GM10248 (cell line): ENCODE measurements at regions of chr10 and their contacts with region 1.

Region 1: GRCh38 chr10:119445311-119445934 is 97.1 kb downstream of the RGS10 start:
- DNase-seq: peak; percentile 89
- CTCF ChIP-seq: peak; percentile 96

Region 2: GRCh38 chr10:119368991-119369869 is 76.2 kb before region 1 on chr10:
- CTCF ChIA-PET with region 1: no interaction called
- POLR2A ChIA-PET with region 1: no interaction called
- DNase-seq: peak; percentile 75
- CTCF ChIP-seq: no peak

Region 3: DNA sequence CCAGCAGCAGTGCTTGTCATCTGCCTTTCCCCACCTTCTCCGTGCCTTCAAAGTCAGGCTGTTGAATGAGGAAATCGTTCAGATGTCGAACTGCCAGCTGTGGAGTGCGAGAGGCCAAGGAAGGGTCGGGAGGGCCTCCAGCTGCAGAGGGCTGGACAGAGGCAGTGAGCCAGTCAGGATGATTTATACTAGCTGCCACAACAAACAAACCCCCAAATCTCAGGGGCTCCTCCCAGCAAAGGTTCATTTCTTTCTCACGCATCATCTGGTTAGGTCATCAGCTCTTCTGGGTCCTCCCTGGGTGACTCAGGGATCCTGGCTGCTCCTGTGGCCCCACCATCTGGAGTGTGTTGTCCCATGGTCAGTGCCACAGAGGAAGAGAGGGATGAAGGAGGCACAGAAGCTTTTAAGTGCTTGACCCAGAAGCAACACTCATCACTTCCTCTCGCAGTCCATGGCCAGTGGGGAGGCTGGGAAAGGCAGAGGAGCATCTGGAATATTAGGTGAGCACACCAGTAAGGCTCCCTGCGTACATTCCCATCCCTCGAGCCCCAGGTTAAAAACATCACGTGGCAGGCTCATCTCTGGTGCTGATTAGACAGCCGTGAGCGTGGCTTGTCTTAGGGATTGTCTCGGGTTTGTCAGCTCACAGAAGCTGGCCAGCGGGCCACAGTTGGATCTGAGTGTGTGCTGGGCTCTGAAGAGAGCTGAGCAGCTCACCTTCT is 43.6 kb before region 1 on chr10:
- CTCF ChIA-PET with region 1: interaction called, 10 read pairs
- POLR2A ChIA-PET with region 1: no interaction called
- DNase-seq: no peak
- CTCF ChIP-seq: no peak

Region 4: DNA sequence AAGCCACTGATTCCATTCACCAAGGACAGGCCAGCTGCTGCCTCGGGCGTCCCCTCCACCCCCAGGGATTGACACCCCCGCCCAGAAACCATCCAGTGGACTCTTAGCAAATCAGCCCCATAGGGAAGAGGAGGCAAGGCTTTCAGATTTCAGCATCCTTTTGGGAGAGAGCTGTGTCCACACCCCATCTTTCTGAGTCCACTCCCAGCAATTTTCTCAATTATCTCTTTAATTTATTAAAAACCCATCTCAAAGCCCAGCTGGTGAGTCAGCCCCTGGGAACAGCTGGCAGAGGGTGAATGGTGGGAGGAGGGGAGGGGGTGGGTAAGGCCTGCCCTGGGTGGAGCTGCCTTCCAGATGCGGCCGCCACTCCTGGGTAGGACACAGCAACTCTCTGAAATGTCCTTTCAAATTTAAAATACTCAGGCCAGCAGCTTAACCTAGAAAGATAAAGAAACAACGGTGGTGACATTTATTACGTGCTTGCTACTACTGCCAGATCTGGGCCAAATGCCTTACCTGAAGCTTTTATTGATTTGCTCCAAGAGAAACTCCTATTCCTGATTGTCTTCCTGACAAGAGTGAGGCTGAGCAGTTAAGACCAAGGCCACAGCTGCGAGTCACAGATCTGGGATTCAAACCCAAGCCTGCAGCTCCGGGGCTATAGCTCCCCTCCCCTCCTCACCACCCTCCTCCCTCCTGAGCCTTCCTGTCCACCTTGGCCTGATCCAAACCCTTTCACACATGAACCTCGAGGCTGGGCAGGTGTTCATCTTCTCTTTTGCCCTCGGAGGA is 23.3 kb before region 1 on chr10:
- CTCF ChIA-PET with region 1: interaction called, 34 read pairs
- POLR2A ChIA-PET with region 1: no interaction called
- DNase-seq: no peak
- CTCF ChIP-seq: no peak

Region 5: DNA sequence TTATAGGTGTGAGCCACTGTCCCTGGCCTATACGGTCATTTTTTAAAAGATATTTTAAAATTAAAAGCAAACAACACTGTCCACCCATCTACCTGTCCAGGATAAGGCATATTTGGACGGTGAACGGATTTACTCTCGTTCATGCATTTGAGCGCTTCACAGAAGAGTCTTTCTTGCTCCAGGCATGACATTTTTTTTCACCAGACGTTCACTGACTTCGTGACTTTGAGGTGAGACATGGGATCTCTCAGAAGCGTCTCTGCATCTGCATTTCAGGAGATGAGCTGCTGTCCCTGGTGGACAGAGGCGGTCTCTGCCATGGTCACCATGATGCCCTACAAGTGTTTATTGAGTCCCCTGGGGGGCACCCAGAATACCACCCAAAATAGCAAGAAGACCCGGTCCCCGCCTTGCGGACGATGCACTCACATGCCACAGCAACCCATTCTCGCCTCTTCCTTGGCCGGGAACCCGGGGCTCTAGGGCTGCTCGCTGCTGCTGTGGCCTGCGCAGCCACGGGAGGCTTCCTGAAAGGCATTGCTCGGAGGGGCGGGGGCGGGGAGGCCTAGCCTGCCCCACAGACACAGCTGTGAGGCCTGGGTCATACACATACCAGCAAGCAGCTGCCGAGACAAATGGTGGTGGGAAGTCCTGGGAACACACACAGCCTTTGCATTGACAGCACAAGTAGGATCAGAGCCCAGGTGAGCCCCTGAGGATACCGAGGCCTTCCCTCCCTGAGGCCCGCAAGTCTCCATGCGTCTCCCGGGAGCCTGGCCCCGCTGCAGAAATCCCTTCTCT is 12.7 kb after region 1 on chr10:
- CTCF ChIA-PET with region 1: interaction called, 16 read pairs
- POLR2A ChIA-PET with region 1: no interaction called
- DNase-seq: no peak
- CTCF ChIP-seq: no peak

Region 6: DNA sequence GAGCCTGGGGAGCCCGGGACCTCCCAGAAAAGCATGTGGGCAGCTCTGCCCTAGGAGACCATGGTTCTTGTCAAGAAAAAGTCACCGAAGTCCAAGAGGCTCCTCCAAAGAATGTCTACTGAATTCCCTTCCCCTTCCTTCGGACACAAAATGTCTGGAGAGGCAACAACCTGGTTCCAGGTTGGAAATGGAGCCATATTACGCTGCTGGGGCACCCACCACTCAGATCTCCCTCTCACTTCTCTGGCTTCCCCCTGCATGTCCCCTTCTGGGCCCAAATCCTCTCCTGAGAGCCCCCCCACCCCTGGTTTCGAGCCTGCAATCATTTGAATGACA is 44.5 kb after region 1 on chr10:
- CTCF ChIA-PET with region 1: interaction called, 39 read pairs
- POLR2A ChIA-PET with region 1: no interaction called
- DNase-seq: no peak
- CTCF ChIP-seq: no peak